ENCODE measurements at regions of chr7 and their contacts with region 1.

Region 1: GRCh38 chr7:1065263-1066260 is 21.2 kb downstream of the GPR146 start:
- H3K4me3 Mint-ChIP-seq: peak overlapping the region; percentile 49
- H3K27ac Mint-ChIP-seq: no peak overlapping the region
- H3K4me1 Mint-ChIP-seq: peaks cover 38% of the 10 kb centered on the region
- H3K27me3 Mint-ChIP-seq: peaks cover 64% of the 10 kb centered on the region

Region 2: DNA sequence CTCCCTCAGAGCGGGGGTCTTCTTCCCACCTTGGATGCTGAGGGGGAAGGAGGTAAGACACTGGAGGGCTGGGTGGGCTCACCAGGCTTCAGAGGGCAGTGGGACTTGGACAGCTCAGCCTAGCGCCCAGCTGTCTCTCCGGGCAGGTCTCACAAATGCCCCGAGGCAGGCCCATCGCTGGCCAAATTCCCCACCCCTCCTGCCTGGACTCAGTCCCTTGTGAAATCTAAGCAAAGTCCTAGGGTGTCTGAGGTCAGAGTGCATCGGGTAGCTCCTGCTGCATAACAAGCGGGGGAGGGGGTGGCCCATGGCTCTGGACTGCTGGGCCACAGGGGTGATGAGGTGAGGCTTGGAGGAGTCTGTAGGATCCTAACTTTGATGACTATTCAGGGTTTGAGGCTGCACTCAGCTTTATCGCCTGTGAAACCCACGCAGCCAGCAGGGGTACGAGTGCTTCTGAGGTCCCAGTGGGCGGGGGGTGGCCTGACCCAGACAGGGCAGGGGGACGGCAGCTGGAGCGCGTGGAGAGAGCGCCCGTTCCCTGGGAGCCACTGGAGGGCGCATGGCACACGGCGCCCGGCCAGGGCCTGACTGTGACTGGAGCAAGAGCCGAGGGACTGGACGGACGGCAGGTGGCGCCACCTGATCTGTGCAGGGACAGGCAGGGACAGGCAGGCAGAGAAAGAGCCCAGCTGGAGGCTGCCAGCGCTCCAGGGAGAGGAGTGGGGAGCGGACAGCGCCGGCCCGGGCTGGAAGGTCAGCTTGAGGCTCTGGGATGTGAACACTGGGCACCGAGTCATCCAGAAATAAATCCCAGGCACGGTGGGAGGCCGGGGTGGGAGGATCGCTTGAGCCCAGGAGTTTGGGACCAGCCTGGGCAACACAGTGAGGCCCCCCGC is 72.6 kb before region 1 on chr7:
- intact Hi-C with region 1: loop called (anchors 1 kb)
- H3K4me3 Mint-ChIP-seq: no peak overlapping the region
- H3K27ac Mint-ChIP-seq: no peak overlapping the region
- H3K4me1 Mint-ChIP-seq: peaks cover 17% of the 10 kb centered on the region
- H3K27me3 Mint-ChIP-seq: peaks cover 42% of the 10 kb centered on the region

Region 3: GRCh38 chr7:1044191-1045068 is 21.1 kb before region 1 on chr7 and contains the start of gene GPR146:
- intact Hi-C with region 1: loop called (anchors 1 kb)
- H3K4me3 Mint-ChIP-seq: peak within 1 kb of the TSS; percentile 86
- H3K27ac Mint-ChIP-seq: peak within 1 kb of the TSS; percentile 88
- H3K4me1 Mint-ChIP-seq: peaks cover 67% of the 10 kb centered on the region
- H3K27me3 Mint-ChIP-seq: peaks cover 34% of the 10 kb centered on the region

Region 4: GRCh38 chr7:1103009-1103788 is 37.6 kb after region 1 on chr7:
- intact Hi-C with region 1: no loop called
- H3K4me3 Mint-ChIP-seq: no peak overlapping the region
- H3K27ac Mint-ChIP-seq: no peak overlapping the region
- H3K4me1 Mint-ChIP-seq: no peaks in the 10 kb centered on the region
- H3K27me3 Mint-ChIP-seq: peaks cover 2% of the 10 kb centered on the region